AG04449 (cell line): ENCODE measurements at regions of chr13 and their contacts with region 1.

Region 1: DNA sequence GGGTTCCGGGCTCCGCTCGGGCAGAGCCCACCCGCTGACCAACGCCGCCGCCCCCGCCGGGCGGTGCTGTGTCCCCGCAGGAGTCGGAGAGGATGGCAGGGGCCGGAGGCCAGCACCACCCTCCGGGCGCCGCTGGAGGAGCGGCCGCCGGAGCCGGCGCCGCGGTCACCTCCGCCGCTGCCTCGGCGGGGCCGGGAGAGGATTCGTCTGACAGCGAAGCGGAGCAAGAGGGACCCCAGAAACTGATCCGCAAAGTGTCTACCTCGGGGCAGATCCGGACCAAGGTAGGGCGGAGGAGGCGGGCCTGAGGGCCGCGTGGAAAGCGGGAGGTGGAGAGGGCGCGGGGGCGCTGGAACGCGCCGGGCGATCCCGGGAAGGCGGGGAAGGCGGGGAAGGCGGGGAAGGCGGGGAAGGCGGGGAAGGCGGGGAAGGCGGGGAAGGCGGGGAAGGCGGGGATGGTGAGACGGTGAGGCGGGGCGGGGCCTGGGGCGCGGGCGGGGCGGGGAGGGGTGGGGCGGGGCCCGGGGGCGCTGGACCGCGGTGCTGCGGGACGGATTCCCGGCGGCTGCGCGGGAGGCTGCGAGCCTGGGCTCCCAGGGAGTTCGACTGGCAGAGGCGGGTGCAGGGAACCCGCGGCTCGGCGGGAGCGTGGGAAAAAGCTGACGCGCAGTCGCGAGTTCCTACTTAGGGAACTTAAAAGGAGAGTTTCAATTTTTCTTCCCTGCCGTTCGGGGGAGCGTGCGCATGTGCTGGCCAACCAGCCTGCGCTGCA is 420 bp downstream of the DGKH start:
- DNase-seq: no peak
- H3K4me3 ChIP-seq: peak overlapping the region; percentile 78
- CTCF ChIP-seq: peak; percentile 6

Region 2: DNA sequence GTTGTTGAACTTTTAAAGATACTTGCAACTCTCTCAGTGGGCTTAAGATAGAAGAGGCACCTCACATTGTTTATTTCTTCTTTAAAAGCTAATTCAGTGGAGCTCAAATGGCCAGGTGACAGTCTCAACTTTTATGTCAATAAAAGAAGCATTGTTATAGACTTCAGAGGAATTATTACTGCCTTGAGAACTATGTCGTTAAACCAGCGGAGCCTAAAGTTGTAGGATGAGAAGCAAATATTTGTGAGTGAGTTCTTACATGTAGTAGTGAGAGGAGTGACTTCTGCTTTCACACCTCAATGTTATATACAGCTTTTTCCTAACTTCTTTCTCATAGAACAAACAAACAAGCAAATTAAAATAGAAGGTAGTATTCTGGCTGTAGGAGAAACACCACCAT is 31.6 kb before region 1 on chr13:
- CTCF ChIA-PET with region 1: no interaction called
- POLR2A ChIA-PET with region 1: no interaction called
- DNase-seq: no peak
- H3K4me3 ChIP-seq: no peak overlapping the region
- CTCF ChIP-seq: no peak

Region 3: DNA sequence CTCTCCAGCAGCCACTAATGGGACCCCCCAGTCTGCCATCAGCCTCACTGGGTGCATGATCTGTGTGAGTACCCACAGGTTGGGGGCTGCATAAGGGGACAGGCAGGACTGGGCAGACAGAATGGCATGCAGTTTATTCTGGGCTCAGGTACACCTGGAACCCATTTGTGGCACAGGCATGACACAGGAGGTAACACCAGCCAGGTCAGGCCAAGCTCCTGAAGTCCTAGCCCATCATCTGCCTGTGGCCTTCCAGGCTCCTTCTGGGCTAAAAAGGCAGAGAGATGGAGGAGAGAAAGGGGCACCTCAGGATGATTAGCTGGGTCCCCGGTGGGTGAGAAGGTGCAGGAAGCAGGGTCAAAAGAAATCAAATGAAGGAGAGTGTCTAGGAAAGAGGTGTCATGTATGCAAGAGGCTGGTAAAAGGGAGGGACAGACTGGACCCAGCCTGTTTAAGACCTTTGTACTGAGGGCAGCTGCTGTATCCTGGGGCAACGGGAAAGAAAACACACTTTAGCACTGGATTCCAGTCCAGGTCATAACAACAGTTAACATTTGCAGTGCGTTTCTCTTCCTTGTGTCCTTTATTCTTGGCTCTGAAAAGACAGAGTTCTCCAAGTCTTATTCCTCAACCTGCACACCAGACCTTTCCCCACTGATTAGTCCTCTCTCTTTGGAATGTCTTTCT is 20.6 kb before region 1 on chr13:
- CTCF ChIA-PET with region 1: no interaction called
- POLR2A ChIA-PET with region 1: no interaction called
- DNase-seq: no peak
- H3K4me3 ChIP-seq: no peak overlapping the region
- CTCF ChIP-seq: no peak

Region 4: GRCh38 chr13:42071672-42072419 is 23.0 kb after region 1 on chr13:
- CTCF ChIA-PET with region 1: no interaction called
- POLR2A ChIA-PET with region 1: no interaction called
- DNase-seq: no peak
- H3K4me3 ChIP-seq: no peak overlapping the region
- CTCF ChIP-seq: no peak

Region 5: GRCh38 chr13:42110410-42111155 is 61.7 kb after region 1 on chr13:
- CTCF ChIA-PET with region 1: interaction called, 11 read pairs
- POLR2A ChIA-PET with region 1: no interaction called
- DNase-seq: peak; percentile 23
- H3K4me3 ChIP-seq: no peak overlapping the region
- CTCF ChIP-seq: peak; percentile 44